ENCODE measurements at regions of chr12 and their contacts with region 1.

Region 1: GRCh38 chr12:751192-751998 is 984 bp upstream of the WNK1 start:
- DNase-seq: peak; percentile 77 to 83 (median 78)
- H3K4me3 ChIP-seq: peak overlapping the region; percentile 67 to 96
- H3K4me3 Mint-ChIP-seq: no peak overlapping the region
- H3K27ac ChIP-seq: peak overlapping the region; percentile 89
- H3K27ac Mint-ChIP-seq: no peak overlapping the region
- H3K4me1 ChIP-seq: peaks cover 33% of the 10 kb centered on the region
- H3K4me1 Mint-ChIP-seq: peaks cover 2 to 15% (median 12%) of the 10 kb centered on the region in 4 donors
- H3K27me3 ChIP-seq: no peaks in the 10 kb centered on the region
- H3K27me3 Mint-ChIP-seq: no peaks in the 10 kb centered on the region

Region 2: DNA sequence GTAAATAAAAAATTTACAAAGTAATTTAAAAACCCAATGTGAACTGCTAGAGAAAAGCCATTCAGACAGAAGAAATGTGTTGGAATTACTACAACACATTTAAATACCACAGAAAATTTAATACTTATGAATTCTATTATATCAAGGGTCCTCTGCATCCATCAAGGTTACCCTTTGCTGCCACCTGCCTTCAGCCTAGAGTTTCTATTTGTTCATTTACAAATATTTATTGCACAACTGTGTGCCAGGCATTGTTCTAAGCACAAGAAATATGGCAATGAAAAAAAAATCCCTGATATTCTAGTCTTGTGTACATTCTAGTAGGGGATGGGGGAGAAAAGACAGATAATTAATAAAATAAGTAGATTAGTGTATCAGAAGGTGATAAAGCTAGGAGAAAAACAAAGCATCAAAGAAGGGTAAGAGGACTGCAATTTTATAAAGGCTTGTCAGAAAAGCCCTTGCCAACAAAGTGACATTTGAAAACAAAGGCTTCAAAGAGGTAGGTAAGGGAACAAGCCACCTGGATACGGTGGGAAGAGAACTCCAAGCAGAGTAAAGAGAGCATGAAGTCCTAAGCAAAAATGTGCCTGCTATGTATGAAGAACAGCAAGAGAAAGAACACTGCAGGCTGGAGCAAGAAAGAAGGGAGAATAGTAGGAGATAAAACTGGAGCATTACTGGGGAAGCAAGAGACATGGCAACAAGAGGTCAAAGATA is 429.6 kb before region 1 on chr12:
- CTCF ChIA-PET with region 1: no interaction called
- POLR2A ChIA-PET with region 1: no interaction called
- intact Hi-C with region 1: no loop called
- DNase-seq: no peak
- H3K4me3 ChIP-seq: no peak overlapping the region
- H3K4me3 Mint-ChIP-seq: no peak overlapping the region
- H3K27ac ChIP-seq: no peak overlapping the region
- H3K27ac Mint-ChIP-seq: peak overlapping the region in 1 of 7 donors; percentile 60
- H3K4me1 ChIP-seq: no peaks in the 10 kb centered on the region
- H3K4me1 Mint-ChIP-seq: peaks cover 6 to 20% (median 15%) of the 10 kb centered on the region in 4 donors
- H3K27me3 ChIP-seq: no peaks in the 10 kb centered on the region
- H3K27me3 Mint-ChIP-seq: no peaks in the 10 kb centered on the region

Region 3: GRCh38 chr12:575948-576612 is 175.3 kb before region 1 on chr12:
- CTCF ChIA-PET with region 1: interaction called, 112 read pairs
- POLR2A ChIA-PET with region 1: interaction called, 49 read pairs
- intact Hi-C with region 1: loop called (anchors 1 kb)
- DNase-seq: peak; percentile 71 to 89 (median 82)
- H3K4me3 ChIP-seq: peak overlapping the region in 1 of 2 donors; percentile 38
- H3K4me3 Mint-ChIP-seq: peak overlapping the region in 7 of 8 donors; percentile 12 to 74 (median 68)
- H3K27ac ChIP-seq: no peak overlapping the region
- H3K27ac Mint-ChIP-seq: peak overlapping the region in 6 of 7 donors; percentile 65 to 92 (median 79)
- H3K4me1 ChIP-seq: peaks cover 15% of the 10 kb centered on the region
- H3K4me1 Mint-ChIP-seq: peaks cover 6 to 23% (median 14%) of the 10 kb centered on the region in 4 donors
- H3K27me3 ChIP-seq: no peaks in the 10 kb centered on the region
- H3K27me3 Mint-ChIP-seq: no peaks in the 10 kb centered on the region

Region 4: DNA sequence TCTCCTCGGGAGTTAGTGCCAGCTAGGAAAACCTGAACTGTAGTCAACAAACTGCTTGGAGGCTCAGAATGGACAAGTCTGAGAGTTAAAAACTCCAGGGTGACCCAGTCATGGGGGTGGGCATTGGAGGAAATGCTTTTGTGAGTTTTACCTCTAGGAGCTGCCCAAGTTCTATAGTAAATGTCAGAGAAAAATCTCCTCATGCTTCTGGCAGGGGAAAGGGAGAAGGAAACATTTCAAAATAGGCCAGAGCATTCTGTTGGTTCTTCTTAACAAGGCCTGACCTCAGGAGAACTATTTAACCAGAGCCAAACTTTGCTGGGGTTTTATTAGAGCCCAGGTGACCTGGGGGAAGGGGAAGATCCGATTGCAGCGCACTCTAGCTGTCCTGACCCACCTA is 100.4 kb before region 1 on chr12:
- CTCF ChIA-PET with region 1: interaction called, 19 read pairs
- POLR2A ChIA-PET with region 1: interaction called, 132 read pairs
- intact Hi-C with region 1: no loop called
- DNase-seq: no peak
- H3K4me3 ChIP-seq: no peak overlapping the region
- H3K4me3 Mint-ChIP-seq: no peak overlapping the region
- H3K27ac ChIP-seq: no peak overlapping the region
- H3K27ac Mint-ChIP-seq: peak overlapping the region in 1 of 7 donors; percentile 26
- H3K4me1 ChIP-seq: no peaks in the 10 kb centered on the region
- H3K4me1 Mint-ChIP-seq: peaks cover 6 to 8% (median 8%) of the 10 kb centered on the region in 4 donors
- H3K27me3 ChIP-seq: no peaks in the 10 kb centered on the region
- H3K27me3 Mint-ChIP-seq: no peaks in the 10 kb centered on the region

Region 5: DNA sequence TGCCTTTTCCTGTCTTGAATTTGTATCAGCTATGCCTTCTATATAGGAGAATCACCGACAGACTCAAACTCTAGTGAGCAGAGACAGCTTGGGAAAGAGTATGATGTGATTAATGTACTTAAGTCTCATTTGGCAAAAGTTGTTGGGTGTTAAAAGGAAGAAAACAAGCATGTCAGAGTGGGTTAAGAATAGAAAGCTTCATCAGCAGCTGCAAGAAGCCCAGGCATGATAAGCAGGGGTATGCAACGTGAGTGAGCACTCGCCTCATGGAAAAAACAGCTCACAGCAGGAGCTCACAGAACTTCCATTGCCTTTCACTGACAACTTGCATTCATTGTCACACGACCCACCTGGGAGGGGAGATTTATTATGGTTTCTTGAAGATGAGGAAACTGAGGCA is 34.9 kb before region 1 on chr12:
- CTCF ChIA-PET with region 1: interaction called, 6 read pairs
- POLR2A ChIA-PET with region 1: interaction called, 21 read pairs
- intact Hi-C with region 1: loop called (anchors 5 kb)
- DNase-seq: no peak
- H3K4me3 ChIP-seq: no peak overlapping the region
- H3K4me3 Mint-ChIP-seq: peak overlapping the region in 1 of 8 donors; percentile 43
- H3K27ac ChIP-seq: no peak overlapping the region
- H3K27ac Mint-ChIP-seq: peak overlapping the region in 2 of 7 donors; percentile 10 to 36
- H3K4me1 ChIP-seq: peaks cover 7% of the 10 kb centered on the region
- H3K4me1 Mint-ChIP-seq: peaks cover 18 to 40% (median 23%) of the 10 kb centered on the region in 4 donors
- H3K27me3 ChIP-seq: no peaks in the 10 kb centered on the region
- H3K27me3 Mint-ChIP-seq: peaks cover 0 to 3% of the 10 kb centered on the region in 2 donors

Region 6: DNA sequence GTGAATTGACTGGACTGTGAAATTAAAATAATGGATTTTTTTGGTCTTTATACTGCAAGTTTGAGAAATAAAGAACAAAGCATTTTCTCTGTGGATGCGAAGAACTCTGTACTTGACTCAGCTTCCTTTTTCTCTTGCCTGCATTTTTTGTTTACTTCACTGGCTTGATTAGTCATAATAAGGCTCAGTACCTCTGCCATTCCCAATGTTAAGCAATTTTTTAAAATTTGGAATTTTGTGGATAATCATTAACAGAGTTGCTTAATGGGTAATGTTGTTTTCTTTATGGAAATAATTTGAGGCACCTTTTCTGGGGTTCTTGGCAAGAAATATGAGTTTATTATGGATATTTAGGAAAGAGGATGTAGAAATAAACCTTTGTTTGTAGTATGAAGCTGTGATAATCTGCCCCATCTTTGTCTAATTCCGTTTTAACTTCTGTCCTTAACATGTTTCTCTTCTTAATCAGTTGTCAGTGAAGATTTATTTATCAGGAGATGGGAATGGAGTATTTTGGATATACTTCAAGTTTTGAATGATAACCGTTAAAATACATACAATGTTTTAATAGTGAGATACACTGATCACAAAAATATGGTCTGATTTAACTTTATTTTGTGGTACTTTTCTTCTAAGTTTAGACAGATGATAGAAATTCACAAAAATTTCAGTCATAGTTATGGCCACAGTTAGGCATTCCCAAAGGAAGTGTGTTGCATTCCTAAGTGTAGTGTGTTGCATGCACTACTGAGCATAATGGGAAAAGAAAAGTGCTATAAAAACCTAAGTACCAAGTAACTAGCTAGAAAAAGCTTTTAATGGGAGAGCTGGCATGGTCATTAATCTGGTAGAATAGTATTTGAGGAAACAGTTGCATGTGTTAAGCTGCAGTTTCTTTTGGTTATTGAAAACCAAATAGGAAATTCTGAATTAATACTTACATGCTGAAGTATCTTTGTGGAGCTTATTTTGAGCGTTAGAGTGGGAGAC is 28.6 kb after region 1 on chr12:
- CTCF ChIA-PET with region 1: interaction called, 16 read pairs
- POLR2A ChIA-PET with region 1: interaction called, 106 read pairs
- intact Hi-C with region 1: loop called (anchors 2 kb)
- DNase-seq: no peak
- H3K4me3 ChIP-seq: peak overlapping the region in 1 of 2 donors; percentile 16
- H3K4me3 Mint-ChIP-seq: peak overlapping the region; percentile 78 to 94 (median 83)
- H3K27ac ChIP-seq: peak overlapping the region; percentile 16
- H3K27ac Mint-ChIP-seq: peak overlapping the region; percentile 76 to 93 (median 82)
- H3K4me1 ChIP-seq: peaks cover 81% of the 10 kb centered on the region
- H3K4me1 Mint-ChIP-seq: peaks cover 53 to 78% (median 64%) of the 10 kb centered on the region in 4 donors
- H3K27me3 ChIP-seq: no peaks in the 10 kb centered on the region
- H3K27me3 Mint-ChIP-seq: no peaks in the 10 kb centered on the region

Region 7: DNA sequence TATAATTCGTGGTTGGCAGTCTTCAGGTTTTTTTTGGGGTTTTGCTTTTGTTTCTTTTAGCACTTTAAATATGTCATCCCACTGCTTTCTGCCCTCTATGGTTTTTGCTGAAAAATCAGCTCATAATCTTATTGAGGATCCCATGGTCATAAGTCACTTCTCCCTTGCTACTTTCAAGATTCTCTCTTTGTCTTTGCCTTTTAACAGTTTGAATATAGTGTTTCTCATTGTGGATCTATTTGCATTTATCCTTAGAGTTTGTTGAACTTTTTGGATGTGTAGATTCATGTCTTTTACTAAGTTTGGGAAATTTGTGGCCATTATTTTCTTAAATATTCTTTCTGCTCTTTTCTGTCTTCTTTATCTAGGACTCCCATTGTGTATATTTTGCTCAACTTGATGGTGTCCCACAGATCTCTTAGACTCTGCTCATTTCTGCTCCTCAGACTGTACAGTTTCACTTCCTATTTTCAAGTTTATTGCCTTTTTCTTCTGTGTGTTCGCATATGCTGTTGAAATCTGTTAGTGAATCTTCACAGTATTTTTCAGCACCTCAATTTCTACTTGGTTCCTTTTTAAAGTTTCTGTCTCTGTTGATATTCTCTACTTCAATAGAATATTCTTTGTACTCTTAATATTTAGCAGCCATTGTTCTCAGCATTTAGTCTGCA is 71.8 kb after region 1 on chr12:
- CTCF ChIA-PET with region 1: interaction called, 14 read pairs
- POLR2A ChIA-PET with region 1: interaction called, 5 read pairs
- intact Hi-C with region 1: no loop called
- DNase-seq: no peak
- H3K4me3 ChIP-seq: no peak overlapping the region
- H3K4me3 Mint-ChIP-seq: peak overlapping the region in 3 of 8 donors; percentile 6 to 65 (median 64)
- H3K27ac ChIP-seq: no peak overlapping the region
- H3K27ac Mint-ChIP-seq: peak overlapping the region in 4 of 7 donors; percentile 8 to 62 (median 44)
- H3K4me1 ChIP-seq: peaks cover 64% of the 10 kb centered on the region
- H3K4me1 Mint-ChIP-seq: peaks cover 31 to 65% (median 48%) of the 10 kb centered on the region in 4 donors
- H3K27me3 ChIP-seq: no peaks in the 10 kb centered on the region
- H3K27me3 Mint-ChIP-seq: no peaks in the 10 kb centered on the region

Measured in CD4-positive, alpha-beta memory T cell (primary cell).